HepG2 (cell line): ENCODE measurements at regions of chr3 and their contacts with region 1.

Region 1: DNA sequence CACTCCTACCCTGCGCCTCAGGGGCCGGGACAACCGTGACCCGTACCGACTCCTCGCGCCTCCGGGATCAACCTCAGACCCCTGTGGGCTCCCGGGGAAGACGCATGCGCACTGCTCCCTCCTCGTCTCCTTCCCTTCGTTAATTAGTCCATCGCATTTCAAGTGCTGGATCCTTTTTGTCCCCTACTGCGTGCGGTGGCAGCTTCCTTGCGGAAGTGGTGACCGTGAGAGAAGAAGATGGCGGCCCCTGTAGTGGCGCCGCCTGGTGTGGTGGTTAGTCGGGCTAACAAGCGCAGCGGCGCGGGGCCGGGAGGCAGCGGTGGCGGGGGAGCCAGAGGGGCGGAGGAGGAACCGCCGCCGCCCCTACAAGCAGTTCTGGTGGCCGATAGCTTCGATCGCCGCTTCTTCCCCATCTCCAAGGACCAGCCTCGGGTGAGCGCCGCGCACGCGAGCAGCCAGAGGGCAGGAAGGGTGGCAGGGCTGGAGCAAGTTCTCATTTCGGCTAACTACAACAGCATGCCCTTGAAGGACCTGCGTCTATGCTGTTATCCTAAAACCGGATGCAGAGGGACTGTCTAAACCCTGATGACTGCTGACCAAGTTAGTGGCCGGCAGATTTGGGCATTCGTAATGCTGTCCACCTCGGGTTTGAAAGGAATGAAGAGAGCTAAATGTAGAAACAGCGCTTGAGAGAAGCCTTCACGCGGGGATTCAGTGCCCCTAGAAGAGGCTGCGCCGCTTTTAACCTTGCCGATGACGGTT is at the start of gene EIF2B5:
- DNase-seq: peak; percentile 95
- ATAC-seq: peak; percentile 89
- H3K4me3 ChIP-seq: peak within 1 kb of the TSS; percentile 86 to 94 (median 93)
- H3K27ac ChIP-seq: peak within 1 kb of the TSS; percentile 61
- H3K4me1 ChIP-seq: peaks cover 23% of the 10 kb centered on the region
- H3K27me3 ChIP-seq: no peaks in the 10 kb centered on the region; a peak in 1 of 5 replicates
- CTCF ChIP-seq: peak; percentile 73
- EP300 ChIP-seq: 0 out of 4 replicates have a peak, but pooled peaks of 1 of the 2 experiments have one; percentile 3
- POLR2A ChIP-seq: peak; percentile 87 to 95
- RAD21 ChIP-seq: peak; percentile 41
- total RNA-seq, gene EIF2B5: 60.2 and 60.3 TPM in 2 replicates

Region 2: GRCh38 chr3:183884427-183885296 is 250.7 kb before region 1 on chr3 and contains the start of gene PARL:
- CTCF ChIA-PET with region 1: no interaction called
- POLR2A ChIA-PET with region 1: interaction called, 5 read pairs
- in situ Hi-C with region 1: loop called (anchors 25 kb)
- intact Hi-C with region 1: no loop called
- DNase-seq: peak; percentile 91
- ATAC-seq: peak; percentile 99
- H3K4me3 ChIP-seq: peak within 1 kb of the TSS; percentile 84 to 89 (median 84)
- H3K27ac ChIP-seq: peak within 1 kb of the TSS; percentile 71
- H3K4me1 ChIP-seq: peaks cover 22% of the 10 kb centered on the region; the same call in 1 of the 2 replicates
- H3K27me3 ChIP-seq: no peaks in the 10 kb centered on the region; a peak in 1 of 5 replicates
- CTCF ChIP-seq: peak; percentile 99
- EP300 ChIP-seq: peak in 1 of 2 experiments; percentile 61; a peak in 1 of 4 replicates
- POLR2A ChIP-seq: peak; percentile 90 to 94
- RAD21 ChIP-seq: peak; percentile 82
- total RNA-seq, gene PARL: 58.6 and 60.5 TPM in 2 replicates

Region 3: DNA sequence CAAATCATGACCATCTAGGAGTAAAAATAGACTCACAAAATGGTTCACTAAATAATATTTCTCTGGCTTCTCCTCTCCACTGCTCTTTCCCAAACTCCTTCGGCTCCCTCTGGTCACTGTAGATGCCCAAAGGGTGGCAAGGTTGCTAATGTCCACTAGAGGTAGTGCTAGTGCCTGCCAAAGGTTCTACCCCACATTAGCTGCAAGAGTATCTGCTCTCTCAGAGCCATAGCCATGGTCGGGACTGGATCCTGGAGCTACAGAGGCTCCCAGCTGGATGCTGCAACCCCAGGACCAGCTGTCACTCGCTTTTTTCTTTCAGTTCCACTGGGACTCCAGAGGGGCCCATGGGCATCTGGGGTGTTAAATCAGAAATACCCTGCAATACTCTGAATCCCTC is 95.3 kb before region 1 on chr3:
- CTCF ChIA-PET with region 1: no interaction called
- POLR2A ChIA-PET with region 1: no interaction called
- in situ Hi-C with region 1: no loop called
- intact Hi-C with region 1: loop called (anchors 5 kb)
- DNase-seq: peak; percentile 38
- ATAC-seq: peak; percentile 98
- H3K4me3 ChIP-seq: no peak overlapping the region
- H3K27ac ChIP-seq: no peak overlapping the region
- H3K4me1 ChIP-seq: no peaks in the 10 kb centered on the region
- H3K27me3 ChIP-seq: peaks cover 0 to 30% of the 10 kb centered on the region in 2 experiments; a peak in 3 of 5 replicates
- CTCF ChIP-seq: peak; percentile 69
- EP300 ChIP-seq: no peak
- POLR2A ChIP-seq: no peak
- RAD21 ChIP-seq: peak; percentile 53

Region 4: GRCh38 chr3:184110316-184110725 is 25.0 kb before region 1 on chr3:
- CTCF ChIA-PET with region 1: no interaction called
- POLR2A ChIA-PET with region 1: no interaction called
- in situ Hi-C with region 1: no loop called
- intact Hi-C with region 1: no loop called
- DNase-seq: peak; percentile 50
- ATAC-seq: peak; percentile 66
- H3K4me3 ChIP-seq: no peak overlapping the region; a peak in 1 of 6 replicates
- H3K27ac ChIP-seq: no peak overlapping the region
- H3K4me1 ChIP-seq: peaks cover 7% of the 10 kb centered on the region
- H3K27me3 ChIP-seq: peaks cover 0 to 2% of the 10 kb centered on the region in 2 experiments; a peak in 1 of 5 replicates
- CTCF ChIP-seq: no peak
- EP300 ChIP-seq: no peak
- POLR2A ChIP-seq: no peak
- RAD21 ChIP-seq: no peak

Region 5: DNA sequence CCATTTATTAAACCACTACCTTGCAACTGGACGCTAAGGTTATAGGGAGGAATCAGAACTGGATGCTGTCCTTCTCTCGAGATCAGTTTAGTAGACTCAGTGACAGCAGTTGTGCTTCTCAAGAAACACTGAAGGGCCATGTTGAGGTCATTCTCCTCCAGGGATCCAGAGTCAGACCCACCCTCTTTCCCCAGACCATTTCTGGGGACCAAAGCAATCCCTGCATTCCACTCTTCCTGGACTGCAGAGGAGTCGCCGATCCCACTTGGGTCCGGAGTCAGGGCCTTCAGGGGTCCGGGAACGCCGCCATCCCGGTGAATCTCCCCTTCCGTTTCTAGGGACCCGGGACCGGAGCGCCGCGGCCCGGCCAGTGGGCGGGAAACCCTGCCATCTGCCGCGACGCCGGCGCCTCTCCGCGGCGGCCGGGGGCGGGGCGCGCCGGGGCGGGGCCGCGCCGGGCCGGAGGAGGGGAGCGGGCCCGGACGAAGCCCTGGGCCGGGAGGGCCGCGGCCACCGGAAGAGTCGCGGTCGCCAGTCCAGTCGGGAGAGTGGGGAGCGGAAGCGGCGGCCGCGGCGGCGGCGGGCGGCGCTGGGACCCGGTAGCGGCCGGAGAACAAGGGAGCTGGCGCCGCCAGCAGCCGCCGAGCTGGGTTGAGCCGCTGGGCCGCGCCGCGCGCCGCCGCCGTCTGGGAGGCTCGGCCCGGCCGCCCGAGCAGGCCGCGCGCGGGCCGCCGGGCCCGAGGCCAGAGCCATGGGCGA is 19.7 kb after region 1 on chr3 and contains the start of gene DVL3:
- CTCF ChIA-PET with region 1: no interaction called
- POLR2A ChIA-PET with region 1: interaction called, 28 read pairs
- in situ Hi-C with region 1: no loop called
- intact Hi-C with region 1: no loop called
- DNase-seq: peak; percentile 50
- ATAC-seq: peak; percentile 68
- H3K4me3 ChIP-seq: peak within 1 kb of the TSS; percentile 77 to 100 (median 99)
- H3K27ac ChIP-seq: peak within 1 kb of the TSS; percentile 96
- H3K4me1 ChIP-seq: peaks cover 37% of the 10 kb centered on the region
- H3K27me3 ChIP-seq: no peaks in the 10 kb centered on the region; a peak in 1 of 5 replicates
- CTCF ChIP-seq: no peak; the same call in 1 of the 2 replicates
- EP300 ChIP-seq: no peak
- POLR2A ChIP-seq: peak in 1 of 2 experiments; percentile 60; a peak in 2 of 4 replicates
- RAD21 ChIP-seq: no peak
- total RNA-seq, gene DVL3: 25.4 and 29.0 TPM in 2 replicates